Activated naive CD4-positive, alpha-beta T cell treated with anti-CD3 and anti-CD28 coated beads for 36 hours (primary cell): ENCODE measurements at regions of chr1 and their contacts with region 1.

Region 1: DNA sequence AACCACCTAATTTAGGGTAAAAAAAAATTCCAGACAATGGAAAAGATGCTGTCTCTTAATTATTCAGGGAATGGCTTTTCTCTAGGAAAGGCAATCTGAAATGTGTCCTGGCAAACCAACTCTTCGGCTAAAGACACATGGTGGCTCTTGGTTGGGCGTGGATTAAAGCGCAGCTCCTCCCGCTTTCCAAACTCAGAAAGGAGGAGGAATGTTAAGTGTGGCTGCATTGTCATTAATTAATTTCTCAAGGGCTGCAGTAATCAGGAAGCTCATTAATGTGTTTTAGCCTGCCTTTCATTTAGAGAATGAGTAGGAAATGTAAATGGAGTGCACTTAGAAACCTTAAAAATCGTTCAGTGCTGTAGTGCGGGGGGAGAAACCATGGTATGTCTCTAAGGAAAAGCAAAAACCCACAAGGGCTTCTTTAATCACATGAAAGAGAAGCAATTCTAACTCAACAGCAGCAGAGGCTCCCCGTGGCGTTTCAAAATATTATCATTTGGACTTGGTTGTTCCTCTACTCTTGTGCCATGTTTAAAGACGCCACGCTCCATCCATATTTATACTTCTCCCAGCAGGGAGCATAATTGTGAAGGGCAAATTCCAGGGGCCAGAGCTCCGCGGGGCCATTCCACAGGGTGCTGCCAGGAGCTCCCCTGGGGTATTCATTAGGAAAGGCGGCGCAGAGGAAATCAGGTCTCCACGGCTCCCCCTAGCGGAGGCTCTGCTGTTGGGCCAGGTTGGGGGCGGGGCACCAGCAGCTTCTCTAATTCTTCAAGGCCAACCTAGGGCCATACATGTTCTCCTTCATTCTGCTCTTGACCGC is 91.9 kb upstream of the SSX2IP start:
- DNase-seq: peak; percentile 89
- H3K4me3 Mint-ChIP-seq: peak overlapping the region; percentile 69
- H3K27ac Mint-ChIP-seq: no peak overlapping the region
- H3K4me1 Mint-ChIP-seq: peaks cover 22% of the 10 kb centered on the region
- H3K27me3 Mint-ChIP-seq: no peaks in the 10 kb centered on the region

Region 2: DNA sequence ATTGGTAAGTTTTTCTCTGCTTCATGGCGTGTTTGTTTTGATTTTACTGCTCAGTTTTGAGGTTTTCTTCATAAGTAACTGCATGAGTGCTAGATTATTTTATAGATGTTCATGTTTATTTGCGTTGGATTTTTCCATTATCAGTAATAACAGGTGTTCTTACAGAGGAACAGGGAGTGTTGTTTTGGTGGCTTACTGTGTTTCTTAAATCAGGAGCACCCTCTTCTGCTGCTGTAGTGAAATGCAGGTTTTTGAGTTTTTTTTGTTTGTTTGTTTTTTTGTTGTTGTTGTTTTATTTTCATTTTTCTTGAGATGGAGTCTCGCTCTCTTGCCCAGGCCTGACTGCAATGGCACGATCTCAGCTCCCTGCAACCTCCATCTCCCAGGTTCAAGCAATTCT is 240.5 kb before region 1 on chr1:
- CTCF ChIA-PET with region 1: no interaction called
- intact Hi-C with region 1: no loop called
- DNase-seq: no peak
- H3K4me3 Mint-ChIP-seq: no peak overlapping the region
- H3K27ac Mint-ChIP-seq: no peak overlapping the region
- H3K4me1 Mint-ChIP-seq: peaks cover 12% of the 10 kb centered on the region
- H3K27me3 Mint-ChIP-seq: no peaks in the 10 kb centered on the region

Region 3: GRCh38 chr1:84668185-84668584 is 114.0 kb before region 1 on chr1:
- CTCF ChIA-PET with region 1: no interaction called
- intact Hi-C with region 1: no loop called
- DNase-seq: peak; percentile 13
- H3K4me3 Mint-ChIP-seq: no peak overlapping the region
- H3K27ac Mint-ChIP-seq: no peak overlapping the region
- H3K4me1 Mint-ChIP-seq: peaks cover 5% of the 10 kb centered on the region
- H3K27me3 Mint-ChIP-seq: no peaks in the 10 kb centered on the region

Region 4: GRCh38 chr1:84792421-84792820 is 10.3 kb after region 1 on chr1:
- CTCF ChIA-PET with region 1: interaction called, 16 read pairs
- intact Hi-C with region 1: no loop called
- DNase-seq: no peak
- H3K4me3 Mint-ChIP-seq: no peak overlapping the region
- H3K27ac Mint-ChIP-seq: no peak overlapping the region
- H3K4me1 Mint-ChIP-seq: no peaks in the 10 kb centered on the region
- H3K27me3 Mint-ChIP-seq: peaks cover 3% of the 10 kb centered on the region

Region 5: GRCh38 chr1:84862810-84863251 is 80.7 kb after region 1 on chr1:
- CTCF ChIA-PET with region 1: interaction called, 3 read pairs
- intact Hi-C with region 1: loop called (anchors 1 kb)
- DNase-seq: peak; percentile 63
- H3K4me3 Mint-ChIP-seq: peak overlapping the region; percentile 16
- H3K27ac Mint-ChIP-seq: peak overlapping the region; percentile 51
- H3K4me1 Mint-ChIP-seq: peaks cover 49% of the 10 kb centered on the region
- H3K27me3 Mint-ChIP-seq: peaks cover 3% of the 10 kb centered on the region

Region 6: DNA sequence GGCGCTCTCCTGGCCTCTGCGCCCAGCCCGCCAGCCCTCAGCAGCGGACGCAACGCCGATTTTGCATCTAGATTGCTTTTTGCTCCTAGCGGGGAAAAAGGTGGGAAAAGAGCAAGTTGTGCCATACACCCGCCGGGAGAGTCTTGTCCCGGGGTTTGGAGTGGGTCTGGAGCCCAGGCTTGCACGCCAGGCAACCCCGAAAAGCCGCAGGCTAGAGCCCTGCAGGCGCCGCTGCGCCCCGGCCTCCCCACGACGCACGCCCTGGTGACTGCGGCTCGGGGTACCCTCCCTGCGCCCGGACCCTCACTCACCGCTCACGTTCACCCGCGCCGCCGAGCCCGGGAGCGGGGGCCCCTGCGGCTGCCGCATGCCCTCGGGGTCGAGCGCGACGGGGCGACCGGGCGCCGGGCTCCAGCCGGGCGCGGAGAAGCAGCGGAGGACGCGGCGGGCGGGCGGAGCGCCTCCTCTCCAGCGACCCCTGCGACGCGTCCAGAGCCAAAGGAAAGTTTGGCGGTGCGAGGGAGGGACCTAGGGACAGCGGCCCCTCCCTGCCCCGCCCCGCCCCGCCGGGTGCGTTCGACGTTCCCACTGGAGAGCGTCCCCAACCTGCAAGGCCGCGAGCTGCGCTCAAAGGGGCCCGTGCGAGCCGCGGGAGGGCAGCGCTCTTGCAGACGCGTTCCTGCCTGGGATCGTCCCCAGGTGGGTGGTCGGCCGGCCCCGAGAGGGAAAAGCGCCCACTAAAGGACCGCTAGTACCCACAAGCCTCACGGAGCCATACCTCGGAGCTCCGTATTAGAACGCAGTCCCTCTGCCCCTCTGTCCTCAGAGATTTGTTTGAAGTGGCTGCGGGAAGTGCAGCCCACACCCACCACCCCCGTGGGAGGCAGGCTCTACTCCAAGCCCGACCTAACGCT is 110.8 kb after region 1 on chr1 and contains the start of gene LPAR3:
- CTCF ChIA-PET with region 1: no interaction called
- intact Hi-C with region 1: loop called (anchors 2 kb)
- DNase-seq: peak; percentile 48
- H3K4me3 Mint-ChIP-seq: peak within 1 kb of the TSS; percentile 65
- H3K27ac Mint-ChIP-seq: no peak within 1 kb of the TSS
- H3K4me1 Mint-ChIP-seq: peaks cover 15% of the 10 kb centered on the region
- H3K27me3 Mint-ChIP-seq: peaks cover 26% of the 10 kb centered on the region
- total RNA-seq, gene LPAR3: 0.74 to 1.1 TPM

Region 7: DNA sequence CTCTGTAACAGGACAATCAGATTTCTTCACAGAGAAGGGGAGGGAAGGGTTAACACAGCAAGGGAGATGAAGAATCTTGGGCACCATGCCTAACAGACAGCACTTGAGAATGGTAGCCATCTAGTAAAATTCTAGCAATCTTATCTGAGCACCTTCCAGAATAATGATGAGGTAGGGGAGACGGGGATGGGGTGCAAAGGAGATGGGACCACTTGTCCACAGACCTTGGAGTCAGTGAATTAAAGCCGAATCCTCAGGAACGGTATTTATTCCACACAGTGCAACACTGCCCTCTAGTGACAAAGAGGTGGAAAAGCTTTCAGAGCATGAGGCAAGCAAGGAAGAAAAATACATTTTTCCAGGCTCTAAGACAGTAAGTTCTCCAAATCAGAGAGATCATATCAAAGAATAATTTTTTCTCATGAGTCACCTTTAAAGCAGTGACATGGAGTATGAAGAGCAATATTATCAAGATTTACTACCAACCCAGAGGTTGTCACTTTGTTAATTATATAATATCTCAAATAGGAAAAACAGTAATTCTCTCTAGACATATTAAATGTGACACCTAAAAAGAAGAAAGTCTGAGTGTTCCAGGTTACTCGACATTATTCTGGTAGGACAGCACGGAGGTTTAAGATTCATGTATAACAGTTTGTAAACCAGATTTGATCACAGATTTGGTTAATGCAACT is 154.1 kb after region 1 on chr1:
- CTCF ChIA-PET with region 1: interaction called, 39 read pairs
- intact Hi-C with region 1: loop called (anchors 1 kb)
- DNase-seq: peak; percentile 43
- H3K4me3 Mint-ChIP-seq: no peak overlapping the region
- H3K27ac Mint-ChIP-seq: no peak overlapping the region
- H3K4me1 Mint-ChIP-seq: peaks cover 4% of the 10 kb centered on the region
- H3K27me3 Mint-ChIP-seq: no peaks in the 10 kb centered on the region

Region 8: GRCh38 chr1:85027242-85027983 is 245.3 kb after region 1 on chr1:
- CTCF ChIA-PET with region 1: no interaction called
- intact Hi-C with region 1: loop called (anchors 10 kb)
- DNase-seq: peak; percentile 25
- H3K4me3 Mint-ChIP-seq: no peak overlapping the region
- H3K27ac Mint-ChIP-seq: peak overlapping the region; percentile 34
- H3K4me1 Mint-ChIP-seq: peaks cover 7% of the 10 kb centered on the region
- H3K27me3 Mint-ChIP-seq: no peaks in the 10 kb centered on the region